Activated CD8-positive, alpha-beta memory T cell treated with anti-CD3 and anti-CD28 coated beads, Interleukin-2, amount 10 ng/mL, durations not matched to agents 7 days and 5 days (primary cell): ENCODE measurements at regions of chr10 and their contacts with region 1.

Region 1: GRCh38 chr10:110803830-110804338 is 67.8 kb upstream of the PDCD4 start:
- DNase-seq: peak; percentile 65
- ATAC-seq: peak; percentile 79
- H3K4me3 Mint-ChIP-seq: no peak overlapping the region
- H3K27ac Mint-ChIP-seq: peak overlapping the region; percentile 68
- H3K4me1 Mint-ChIP-seq: peaks cover 29% of the 10 kb centered on the region
- H3K27me3 Mint-ChIP-seq: no peaks in the 10 kb centered on the region

Region 2: DNA sequence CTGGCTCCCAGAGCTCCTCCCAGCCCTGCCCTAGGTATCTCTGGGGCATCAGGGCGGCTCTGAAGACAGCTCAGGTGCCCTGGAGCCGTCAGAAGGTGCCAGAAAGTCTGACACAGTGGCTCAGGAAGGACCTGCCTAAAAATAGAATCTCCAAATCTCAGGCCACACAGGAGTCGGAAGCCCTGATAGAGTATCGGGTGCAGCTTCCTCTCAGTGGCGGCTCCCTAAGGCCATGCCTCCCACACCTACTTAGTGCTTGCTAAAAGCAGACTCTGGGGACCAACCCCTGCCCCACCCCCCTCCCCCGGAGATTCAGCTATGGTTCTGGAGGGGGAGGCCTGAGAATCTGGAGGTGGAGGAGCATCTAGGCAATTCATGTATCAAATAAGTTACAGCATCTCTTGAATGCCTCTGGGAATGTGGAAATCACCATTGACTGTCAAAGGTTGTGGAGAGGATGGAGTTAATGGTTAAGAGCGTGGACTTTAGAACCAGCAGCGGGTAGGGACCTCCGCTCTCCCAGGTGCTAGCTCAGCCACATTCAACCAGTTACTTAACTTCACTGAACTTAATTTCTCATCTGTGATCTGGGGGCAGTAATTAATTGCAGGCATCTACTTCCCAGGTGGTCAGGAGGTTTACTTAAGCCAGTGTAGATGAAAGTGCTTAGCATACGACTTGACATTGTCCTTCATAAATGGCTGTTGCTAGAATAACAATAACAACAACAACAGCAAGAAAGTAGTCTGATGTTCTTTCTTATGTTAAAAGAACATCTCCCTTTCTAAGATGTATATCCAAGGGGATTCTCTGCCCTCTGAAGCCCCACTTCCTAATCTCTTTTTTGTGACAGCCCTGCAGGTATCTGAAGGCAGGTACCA is 635.0 kb before region 1 on chr10:
- CTCF ChIA-PET with region 1: no interaction called
- DNase-seq: peak; percentile 39
- ATAC-seq: peak; percentile 58
- H3K4me3 Mint-ChIP-seq: no peak overlapping the region
- H3K27ac Mint-ChIP-seq: no peak overlapping the region
- H3K4me1 Mint-ChIP-seq: peaks cover 18% of the 10 kb centered on the region
- H3K27me3 Mint-ChIP-seq: peaks cover 88% of the 10 kb centered on the region

Region 3: GRCh38 chr10:110746254-110746826 is 57.5 kb before region 1 on chr10:
- CTCF ChIA-PET with region 1: interaction called, 13 read pairs
- DNase-seq: peak; percentile 56
- ATAC-seq: peak; percentile 57
- H3K4me3 Mint-ChIP-seq: no peak overlapping the region
- H3K27ac Mint-ChIP-seq: no peak overlapping the region
- H3K4me1 Mint-ChIP-seq: peaks cover 41% of the 10 kb centered on the region
- H3K27me3 Mint-ChIP-seq: no peaks in the 10 kb centered on the region

Region 4: DNA sequence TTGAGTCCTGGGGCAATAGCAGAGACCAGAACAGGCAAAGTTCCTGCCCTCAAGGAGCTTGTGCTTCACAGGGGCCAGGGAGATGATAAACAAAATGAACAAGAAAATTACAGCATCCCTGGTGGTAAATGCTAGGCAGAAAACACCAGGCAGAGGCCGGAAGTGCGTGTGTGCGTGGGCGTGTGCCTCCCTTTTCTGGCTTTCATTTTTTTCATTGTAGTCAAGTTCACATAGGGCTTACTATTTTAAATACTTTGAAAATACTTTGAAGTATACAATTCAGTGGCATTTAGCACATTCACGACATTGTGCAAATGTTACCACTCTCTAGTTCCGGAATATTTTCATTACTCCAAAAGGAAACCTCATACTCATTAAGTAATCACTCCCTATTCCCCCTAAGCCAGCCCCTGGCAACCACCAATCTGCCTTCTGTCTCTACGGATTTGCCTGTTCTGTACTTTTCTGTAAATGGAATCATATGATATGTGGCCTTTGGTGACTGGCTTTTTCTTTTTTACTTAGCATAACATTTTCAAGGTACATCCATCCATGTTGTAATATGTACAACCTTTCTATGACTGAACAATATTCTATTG is 20.3 kb before region 1 on chr10:
- CTCF ChIA-PET with region 1: interaction called, 18 read pairs
- DNase-seq: peak; percentile 74
- ATAC-seq: peak; percentile 84
- H3K4me3 Mint-ChIP-seq: no peak overlapping the region
- H3K27ac Mint-ChIP-seq: peak overlapping the region; percentile 75
- H3K4me1 Mint-ChIP-seq: peaks cover 22% of the 10 kb centered on the region
- H3K27me3 Mint-ChIP-seq: no peaks in the 10 kb centered on the region

Region 5: GRCh38 chr10:110843031-110843430 is 39.1 kb after region 1 on chr10:
- CTCF ChIA-PET with region 1: interaction called, 24 read pairs
- DNase-seq: peak; percentile 78
- ATAC-seq: peak; percentile 90
- H3K4me3 Mint-ChIP-seq: no peak overlapping the region
- H3K27ac Mint-ChIP-seq: peak overlapping the region; percentile 64
- H3K4me1 Mint-ChIP-seq: peaks cover 31% of the 10 kb centered on the region
- H3K27me3 Mint-ChIP-seq: no peaks in the 10 kb centered on the region

Region 6: GRCh38 chr10:110871298-110872084 is 67.6 kb after region 1 on chr10 and contains the start of gene PDCD4:
- CTCF ChIA-PET with region 1: interaction called, 20 read pairs
- DNase-seq: peak; percentile 98
- ATAC-seq: peak; percentile 85
- H3K4me3 Mint-ChIP-seq: peak within 1 kb of the TSS; percentile 89
- H3K27ac Mint-ChIP-seq: peak within 1 kb of the TSS; percentile 99
- H3K4me1 Mint-ChIP-seq: peaks cover 64% of the 10 kb centered on the region
- H3K27me3 Mint-ChIP-seq: no peaks in the 10 kb centered on the region
- total RNA-seq, gene PDCD4: 74.0 to 115 TPM

Region 7: DNA sequence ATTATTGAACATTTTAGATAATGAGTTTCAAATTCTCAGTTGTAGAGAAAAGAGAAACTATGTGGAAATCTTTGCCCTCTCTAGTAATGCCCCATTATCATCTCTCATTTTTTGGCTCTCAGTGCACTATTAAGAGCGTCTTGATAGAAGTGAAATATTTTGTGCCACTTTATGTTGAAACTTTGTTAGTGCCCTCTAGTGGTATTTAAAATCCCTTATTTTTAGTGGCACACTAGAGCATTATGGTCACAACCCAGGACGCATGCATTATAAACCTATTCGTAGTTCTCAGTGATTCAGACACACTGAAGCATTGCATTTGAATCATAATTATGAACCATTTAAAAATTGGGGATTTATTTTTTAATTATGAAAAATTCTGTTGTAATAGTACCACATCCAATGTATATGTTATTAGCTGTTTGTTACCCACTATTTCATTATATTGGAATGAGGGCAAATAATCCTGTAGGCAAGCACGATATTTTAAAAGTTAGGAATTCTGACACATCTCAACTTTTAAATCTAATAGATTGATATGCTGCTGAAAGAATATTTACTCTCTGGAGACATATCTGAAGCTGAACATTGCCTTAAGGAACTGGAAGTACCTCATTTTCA is 89.8 kb after region 1 on chr10:
- CTCF ChIA-PET with region 1: interaction called, 28 read pairs
- DNase-seq: no peak
- ATAC-seq: peak; percentile 85
- H3K4me3 Mint-ChIP-seq: no peak overlapping the region
- H3K27ac Mint-ChIP-seq: no peak overlapping the region
- H3K4me1 Mint-ChIP-seq: peaks cover 14% of the 10 kb centered on the region
- H3K27me3 Mint-ChIP-seq: no peaks in the 10 kb centered on the region